ENCODE measurements at regions of chr7 and their contacts with region 1.

Region 1: DNA sequence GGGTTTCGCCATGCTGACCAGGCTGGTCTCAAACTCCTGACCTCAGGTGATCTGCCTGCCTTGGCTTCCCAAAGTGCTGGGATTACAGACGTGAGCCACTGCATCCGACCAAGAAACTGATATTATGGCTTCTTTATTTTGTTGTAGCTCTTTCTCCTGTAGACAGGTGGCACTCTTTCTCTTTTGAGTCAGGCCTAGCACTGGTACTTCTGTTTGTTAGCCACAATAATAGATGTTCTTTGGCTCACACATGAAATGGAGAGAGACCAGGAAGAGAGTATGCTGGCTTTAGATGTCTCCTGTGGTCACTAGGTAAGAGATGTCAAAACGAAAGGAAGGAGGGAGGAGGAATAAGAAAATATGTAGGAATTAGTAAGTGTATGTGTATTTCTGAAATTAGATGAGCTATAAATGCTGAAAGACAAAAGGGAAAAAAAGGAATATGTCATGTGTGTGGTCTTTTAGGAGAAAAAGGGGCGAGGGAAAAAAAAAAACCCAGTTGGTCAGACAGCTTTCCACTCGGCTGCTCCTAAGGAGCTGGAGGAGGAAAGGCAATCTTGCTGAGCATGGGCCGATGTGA is 78.7 kb downstream of the CLEC2L start:
- DNase-seq: peak; percentile 45 to 56
- ATAC-seq: peak; percentile 86 to 94; a peak in 5 of 6 replicates
- H3K4me3 ChIP-seq: no peak overlapping the region
- H3K27ac ChIP-seq: no peak overlapping the region
- H3K4me1 ChIP-seq: no peaks in the 10 kb centered on the region
- CTCF ChIP-seq: peak; percentile 69
- EP300 ChIP-seq: no peak
- POLR2A ChIP-seq: no peak
- RAD21 ChIP-seq: peak; percentile 59 to 68; a peak in 4 of 5 replicates

Region 2: DNA sequence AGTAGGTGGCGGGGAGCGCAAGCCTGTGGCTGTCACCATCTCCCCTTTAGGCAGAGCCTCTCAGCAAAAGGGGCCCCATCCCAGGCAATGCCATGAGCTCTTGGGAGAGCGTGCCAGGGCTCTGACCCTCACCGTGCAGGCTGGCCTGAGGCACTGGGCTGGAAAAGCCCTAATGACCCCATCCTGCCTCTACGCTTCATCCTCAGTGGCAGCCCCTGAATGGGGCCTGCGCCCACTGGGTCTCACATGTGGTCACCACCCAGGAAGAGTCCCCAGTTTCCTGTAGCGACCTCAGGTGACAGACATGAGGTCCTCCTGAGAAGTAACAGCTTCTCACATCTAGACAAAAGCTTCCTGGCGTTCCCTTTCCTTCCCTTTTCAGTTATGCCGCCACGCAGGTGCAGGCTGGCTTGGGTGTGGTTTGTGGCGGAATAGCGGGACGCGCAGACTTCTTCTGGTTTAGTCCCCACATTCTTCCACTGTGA is 19.5 kb before region 1 on chr7:
- CTCF ChIA-PET with region 1: interaction called, 76 read pairs
- POLR2A ChIA-PET with region 1: no interaction called
- DNase-seq: no peak
- ATAC-seq: no peak
- H3K4me3 ChIP-seq: no peak overlapping the region
- H3K27ac ChIP-seq: no peak overlapping the region
- H3K4me1 ChIP-seq: no peaks in the 10 kb centered on the region
- CTCF ChIP-seq: no peak
- EP300 ChIP-seq: no peak
- POLR2A ChIP-seq: no peak
- RAD21 ChIP-seq: no peak

Region 3: GRCh38 chr7:139588632-139589031 is 13.6 kb before region 1 on chr7:
- CTCF ChIA-PET with region 1: interaction called, 76 read pairs
- POLR2A ChIA-PET with region 1: no interaction called
- DNase-seq: no peak
- ATAC-seq: peak in 1 of 2 experiments; percentile 51; a peak in 3 of 6 replicates
- H3K4me3 ChIP-seq: no peak overlapping the region
- H3K27ac ChIP-seq: no peak overlapping the region
- H3K4me1 ChIP-seq: no peaks in the 10 kb centered on the region
- CTCF ChIP-seq: no peak
- EP300 ChIP-seq: no peak
- POLR2A ChIP-seq: no peak
- RAD21 ChIP-seq: no peak

Region 4: GRCh38 chr7:139995017-139995931 is 393.0 kb after region 1 on chr7:
- CTCF ChIA-PET with region 1: interaction called, 72 read pairs
- POLR2A ChIA-PET with region 1: no interaction called
- DNase-seq: no peak
- ATAC-seq: peak; percentile 49 to 65; a peak in 3 of 6 replicates
- H3K4me3 ChIP-seq: no peak overlapping the region
- H3K27ac ChIP-seq: peak overlapping the region; percentile 30 to 43; a peak in 2 of 6 replicates
- H3K4me1 ChIP-seq: peaks cover 17% of the 10 kb centered on the region
- CTCF ChIP-seq: no peak
- EP300 ChIP-seq: no peak
- POLR2A ChIP-seq: no peak
- RAD21 ChIP-seq: 0 out of 5 replicates have a peak, but pooled peaks of 1 of the 2 experiments have one; percentile 14

Measured in A549 (cell line).